ENCODE measurements at regions of chr6 and their contacts with region 1.

Region 1: GRCh38 chr6:593139-593906 is 63.6 kb downstream of the HUS1B start:
- DNase-seq: peak; percentile 55
- H3K4me3 ChIP-seq: no peak overlapping the region
- H3K27ac ChIP-seq: no peak overlapping the region
- H3K4me1 ChIP-seq: no peaks in the 10 kb centered on the region
- H3K27me3 ChIP-seq: no peaks in the 10 kb centered on the region
- CTCF ChIP-seq: peak; percentile 38 to 86 (median 70)
- POLR2A ChIP-seq: no peak

Region 2: DNA sequence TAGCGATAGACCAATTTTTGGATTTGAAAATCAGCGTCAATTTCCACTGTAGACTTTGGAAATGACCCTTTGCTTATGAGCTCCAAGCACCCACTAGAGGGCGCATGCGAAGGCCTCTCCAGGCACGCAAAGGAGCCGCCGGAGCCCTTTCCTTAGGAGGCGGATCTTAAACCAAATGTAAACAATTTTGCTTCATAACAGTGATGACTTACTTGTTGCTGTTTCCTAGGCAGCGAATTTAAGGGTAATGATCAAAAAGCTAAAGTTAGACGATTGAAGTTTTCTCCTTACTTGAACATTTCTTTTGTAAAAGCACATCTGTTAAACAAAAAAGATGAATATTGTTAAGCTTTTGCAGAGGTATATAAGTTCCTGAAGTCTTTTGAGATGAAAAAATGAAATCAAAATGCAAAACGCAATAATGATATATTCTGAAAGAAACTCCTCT is 128.8 kb after region 1 on chr6:
- intact Hi-C with region 1: no loop called
- DNase-seq: peak; percentile 67
- H3K4me3 ChIP-seq: no peak overlapping the region
- H3K27ac ChIP-seq: no peak overlapping the region
- H3K4me1 ChIP-seq: no peaks in the 10 kb centered on the region
- H3K27me3 ChIP-seq: no peaks in the 10 kb centered on the region
- CTCF ChIP-seq: peak; percentile 29 to 68 (median 65)
- POLR2A ChIP-seq: no peak

Region 3: DNA sequence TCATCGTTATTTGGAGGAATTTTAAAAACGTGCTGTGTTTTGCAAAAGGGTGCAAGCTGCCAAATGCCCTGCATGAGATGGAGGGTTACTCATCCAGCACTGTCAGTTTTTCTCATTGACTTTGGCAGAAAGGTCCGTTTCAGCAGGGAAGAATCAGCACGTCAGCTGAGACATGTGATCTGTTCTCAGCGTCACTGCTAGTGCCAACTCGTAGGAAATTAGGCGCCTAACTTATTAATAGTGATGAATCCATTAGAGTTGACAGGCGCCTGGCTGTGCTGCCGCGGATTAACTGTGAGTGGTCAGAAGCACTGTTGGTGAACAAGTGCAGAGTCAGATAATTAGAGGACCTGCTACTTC is 543.1 kb after region 1 on chr6:
- intact Hi-C with region 1: no loop called
- DNase-seq: peak; percentile 33
- H3K4me3 ChIP-seq: no peak overlapping the region
- H3K27ac ChIP-seq: no peak overlapping the region
- H3K4me1 ChIP-seq: no peaks in the 10 kb centered on the region
- H3K27me3 ChIP-seq: no peaks in the 10 kb centered on the region
- CTCF ChIP-seq: no peak
- POLR2A ChIP-seq: no peak

Region 4: DNA sequence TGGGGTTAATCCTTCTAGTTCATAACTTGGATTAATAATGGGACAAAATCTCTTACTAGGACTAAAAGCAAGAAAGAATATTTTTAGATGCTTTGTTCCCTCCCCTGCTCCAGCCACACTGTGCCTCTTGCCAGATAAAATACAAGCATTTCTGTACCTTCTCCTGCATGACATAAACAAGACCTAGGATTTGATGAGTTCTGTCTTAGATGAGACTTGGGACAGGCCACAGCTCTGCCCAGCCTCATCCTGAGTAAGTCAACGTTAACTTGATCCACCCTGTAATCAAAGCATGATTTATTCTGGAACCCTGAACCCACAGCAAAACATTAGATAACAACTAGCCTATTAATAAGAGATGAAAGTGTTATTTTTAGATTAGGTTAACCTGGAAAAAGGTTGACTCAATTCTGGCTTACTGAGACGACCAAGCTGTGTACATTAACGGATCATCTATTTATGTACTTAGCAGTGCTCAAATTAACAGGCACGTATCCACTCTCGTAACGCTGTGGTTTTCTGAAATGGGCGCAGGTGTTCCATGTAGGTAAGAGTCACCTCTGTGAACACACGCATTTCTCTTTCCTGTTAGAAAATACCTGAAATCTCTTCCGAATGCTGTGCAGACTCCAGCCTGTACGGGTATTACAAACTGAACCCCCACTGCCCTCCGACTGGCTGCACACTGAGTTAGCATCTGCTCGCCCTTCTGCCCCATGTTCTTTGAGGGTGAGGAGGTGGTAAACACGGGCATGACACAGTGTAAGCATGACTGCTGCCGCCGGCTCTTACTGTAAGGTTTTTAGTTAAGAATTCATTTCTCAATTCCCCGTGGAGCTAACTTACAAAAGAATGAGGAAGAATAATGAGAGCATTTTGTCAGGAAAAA is 586.5 kb after region 1 on chr6:
- intact Hi-C with region 1: no loop called
- DNase-seq: no peak
- H3K4me3 ChIP-seq: no peak overlapping the region
- H3K27ac ChIP-seq: no peak overlapping the region
- H3K4me1 ChIP-seq: no peaks in the 10 kb centered on the region
- H3K27me3 ChIP-seq: no peaks in the 10 kb centered on the region
- CTCF ChIP-seq: no peak
- POLR2A ChIP-seq: no peak

Region 5: DNA sequence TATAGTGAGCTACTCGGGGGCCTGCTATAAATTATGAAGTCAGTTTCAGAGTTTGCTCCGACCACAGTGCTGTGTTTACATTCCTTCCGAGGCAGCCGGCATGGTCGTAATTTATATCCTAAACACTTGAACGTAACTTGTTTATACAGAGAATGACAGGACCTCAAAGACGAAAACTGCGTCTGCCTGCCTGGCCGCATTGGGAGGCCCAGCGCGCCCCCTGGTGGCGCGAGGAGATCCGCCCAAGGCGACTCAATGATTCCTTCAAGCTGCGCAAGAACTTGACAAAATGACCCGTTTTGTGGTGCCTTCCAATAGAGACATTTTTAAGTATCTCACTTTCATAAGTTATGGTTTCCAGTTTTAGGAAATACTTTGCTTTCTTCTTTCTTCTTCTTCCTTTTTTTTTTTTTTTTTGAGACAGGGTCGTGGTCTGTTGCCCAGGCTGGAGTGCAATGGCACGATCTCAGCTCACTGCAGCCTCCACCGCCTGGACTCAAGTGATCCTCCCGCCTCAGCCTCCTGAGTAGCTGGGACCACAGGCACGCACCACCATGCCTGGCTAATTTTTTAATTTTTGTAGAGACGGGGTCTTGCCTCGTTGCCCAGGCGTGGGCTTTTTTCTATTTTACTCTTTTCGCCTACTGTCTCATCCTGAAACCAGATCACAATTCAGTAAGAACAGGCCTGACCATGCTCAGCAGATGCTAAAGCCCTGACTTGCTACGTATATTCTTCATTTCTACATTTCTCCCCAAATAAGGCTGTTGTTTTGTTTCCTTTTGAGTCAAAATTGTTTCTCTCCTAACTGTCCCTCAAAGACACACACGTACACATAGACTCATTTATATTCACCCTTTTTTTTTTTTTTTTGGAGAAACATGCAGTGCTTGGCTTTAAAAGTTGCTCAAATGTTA is 803.9 kb after region 1 on chr6:
- intact Hi-C with region 1: loop called (anchors 10 kb)
- DNase-seq: peak; percentile 66
- H3K4me3 ChIP-seq: no peak overlapping the region
- H3K27ac ChIP-seq: peak overlapping the region; percentile 30 to 72
- H3K4me1 ChIP-seq: no peaks in the 10 kb centered on the region
- H3K27me3 ChIP-seq: peaks cover 15% of the 10 kb centered on the region
- CTCF ChIP-seq: peak; percentile 83 to 90 (median 86)
- POLR2A ChIP-seq: no peak

Region 6: DNA sequence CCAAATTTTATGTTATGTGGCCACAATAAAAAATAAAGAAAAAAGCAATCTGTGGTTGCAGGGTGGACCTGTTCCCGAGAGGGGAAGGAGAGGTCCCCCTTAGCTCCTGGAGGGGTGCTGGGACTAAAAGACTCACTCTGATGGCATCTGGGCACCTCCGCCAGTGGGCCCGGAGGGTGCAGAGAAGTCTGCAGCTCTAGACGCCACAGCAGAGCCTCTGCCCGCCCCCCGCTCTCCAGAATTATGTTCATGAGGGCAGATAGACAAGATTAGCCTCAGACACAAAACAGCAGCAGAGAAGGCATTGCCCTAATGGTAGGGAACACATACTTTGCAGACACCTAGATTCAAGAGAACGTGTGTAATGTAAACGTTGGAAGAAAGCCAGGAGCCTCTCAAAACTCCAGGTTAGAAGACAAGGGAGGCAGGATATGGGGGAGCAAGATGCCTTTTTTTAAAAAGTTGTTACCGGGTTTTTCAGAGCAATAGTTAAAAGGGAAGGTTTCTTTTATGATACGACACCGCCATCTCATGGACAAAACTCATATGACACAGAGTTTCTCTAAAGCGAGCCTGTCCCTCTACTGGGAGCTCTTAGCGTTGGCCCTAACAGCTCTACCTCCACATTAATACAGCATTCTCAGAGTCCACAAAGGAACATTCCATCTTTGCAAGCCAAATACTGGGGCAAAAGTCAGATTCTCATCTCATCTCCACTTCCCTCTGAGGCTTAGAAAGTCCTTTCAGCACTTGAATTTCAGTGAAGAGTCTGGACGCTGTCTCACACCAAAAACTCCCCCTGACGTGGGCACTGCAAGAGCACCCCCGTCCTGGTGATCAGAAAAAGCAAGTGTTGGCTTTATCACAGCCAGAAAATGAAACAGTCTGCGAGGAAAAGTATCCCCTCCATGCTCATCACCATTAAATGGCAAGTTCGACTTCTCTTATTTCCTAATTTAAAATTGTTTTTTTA is 843.3 kb after region 1 on chr6:
- intact Hi-C with region 1: loop called (anchors 5 kb)
- DNase-seq: peak; percentile 54
- H3K4me3 ChIP-seq: no peak overlapping the region
- H3K27ac ChIP-seq: no peak overlapping the region
- H3K4me1 ChIP-seq: no peaks in the 10 kb centered on the region
- H3K27me3 ChIP-seq: no peaks in the 10 kb centered on the region
- CTCF ChIP-seq: peak; percentile 59 to 87 (median 84)
- POLR2A ChIP-seq: no peak

Measured in prostate gland (tissue), 2 donors.